ENCODE measurements at regions of chr2 and their contacts with region 1.

Region 1: DNA sequence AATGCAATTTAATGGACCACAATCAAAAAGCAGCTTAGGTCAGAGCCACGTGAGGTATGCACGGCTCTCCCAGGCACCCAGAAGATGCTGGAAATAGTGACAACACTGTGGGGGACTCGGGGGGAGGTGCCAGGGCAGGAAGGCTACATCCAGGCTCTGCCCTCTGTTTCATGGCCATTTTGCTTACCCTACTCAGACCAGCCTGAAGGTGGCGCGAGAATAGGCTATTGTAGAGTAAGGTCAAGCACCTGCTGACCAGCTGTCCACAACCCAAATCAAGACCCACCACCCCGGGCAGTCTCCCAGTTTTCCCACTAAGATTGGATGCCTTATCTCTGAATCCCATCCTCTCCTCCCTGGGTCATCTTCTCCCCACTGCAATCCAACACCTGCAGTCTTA is 115.7 kb downstream of the VIT start:
- DNase-seq: peak; percentile 78
- ATAC-seq: peak; percentile 99
- H3K4me3 Mint-ChIP-seq: no peak overlapping the region
- H3K27ac Mint-ChIP-seq: no peak overlapping the region
- H3K4me1 Mint-ChIP-seq: peaks cover 3% of the 10 kb centered on the region; the same call in 1 of the 2 replicates
- H3K27me3 Mint-ChIP-seq: peaks cover 2% of the 10 kb centered on the region; the same call in 1 of the 2 replicates
- CTCF ChIP-seq: no peak; the same call in 1 of the 2 replicates

Region 2: DNA sequence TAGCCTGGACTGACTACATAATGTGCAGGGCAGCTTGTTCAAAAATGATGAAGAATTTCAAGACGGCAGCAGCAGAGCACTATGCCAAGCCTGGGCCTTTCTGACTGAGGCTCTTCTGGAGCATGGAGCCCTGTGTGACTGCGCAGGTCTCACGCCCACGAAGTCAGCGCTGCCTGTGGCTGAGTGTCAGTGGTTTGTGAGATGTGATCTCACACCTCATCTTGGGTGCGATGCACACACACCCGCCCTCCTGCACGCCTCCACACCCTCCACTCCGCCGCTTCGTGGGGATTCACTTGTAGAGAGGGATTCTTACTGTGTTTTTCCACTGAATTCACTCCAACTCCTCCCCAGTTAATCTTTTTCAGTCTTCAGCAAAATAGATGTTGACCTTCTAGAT is 11.8 kb before region 1 on chr2:
- CTCF ChIA-PET with region 1: interaction called, 11 read pairs
- POLR2A ChIA-PET with region 1: no interaction called
- DNase-seq: no peak
- ATAC-seq: no peak
- H3K4me3 Mint-ChIP-seq: no peak overlapping the region
- H3K27ac Mint-ChIP-seq: no peak overlapping the region
- H3K4me1 Mint-ChIP-seq: peaks cover 10% of the 10 kb centered on the region
- H3K27me3 Mint-ChIP-seq: no peaks in the 10 kb centered on the region
- CTCF ChIP-seq: no peak

Measured in WTC11 (cell line).